B cell (primary cell): ENCODE measurements at regions of chr5 and their contacts with region 1.

Region 1: DNA sequence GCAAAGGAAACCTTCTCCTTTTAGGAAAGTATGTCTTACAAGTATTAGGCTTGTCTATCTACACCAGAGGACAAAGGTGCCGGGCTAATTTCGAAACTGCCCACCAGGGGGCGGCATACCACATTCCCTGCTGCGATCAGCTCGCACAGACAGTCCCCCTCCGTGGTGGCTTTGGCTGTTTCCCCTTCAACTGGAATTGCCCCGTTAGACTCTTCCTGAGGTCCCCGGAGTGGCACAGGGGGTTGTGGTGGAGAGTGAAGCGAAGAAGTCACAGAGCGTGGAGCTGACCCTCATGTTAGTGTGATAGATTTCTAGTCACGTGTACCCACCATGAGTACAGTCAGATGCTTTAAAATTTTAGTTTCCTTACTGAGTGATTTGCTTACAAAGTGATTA is 17.5 kb downstream of the PTTG1 start:
- DNase-seq: peak; percentile 91
- ATAC-seq: peak; percentile 80
- H3K4me3 ChIP-seq: peak overlapping the region; percentile 44 to 83 (median 64)
- H3K4me3 Mint-ChIP-seq: peak overlapping the region; percentile 92
- H3K27ac ChIP-seq: peak overlapping the region; percentile 14 to 54
- H3K27ac Mint-ChIP-seq: peak overlapping the region; percentile 89
- H3K4me1 ChIP-seq: peaks cover 15 to 21% of the 10 kb centered on the region in 2 donors
- H3K4me1 Mint-ChIP-seq: peaks cover 40% of the 10 kb centered on the region
- H3K27me3 ChIP-seq: no peaks in the 10 kb centered on the region
- H3K27me3 Mint-ChIP-seq: no peaks in the 10 kb centered on the region
- CTCF ChIP-seq: peak; percentile 79

Region 2: GRCh38 chr5:160240350-160240749 is 198.9 kb before region 1 on chr5:
- CTCF ChIA-PET with region 1: no interaction called
- POLR2A ChIA-PET with region 1: no interaction called
- intact Hi-C with region 1: no loop called
- DNase-seq: no peak
- ATAC-seq: no peak
- H3K4me3 ChIP-seq: no peak overlapping the region
- H3K4me3 Mint-ChIP-seq: no peak overlapping the region
- H3K27ac ChIP-seq: no peak overlapping the region
- H3K27ac Mint-ChIP-seq: no peak overlapping the region
- H3K4me1 ChIP-seq: no peaks in the 10 kb centered on the region
- H3K4me1 Mint-ChIP-seq: no peaks in the 10 kb centered on the region
- H3K27me3 ChIP-seq: peaks cover 0 to 3% (median 0%) of the 10 kb centered on the region in 4 experiments
- H3K27me3 Mint-ChIP-seq: peaks cover 12% of the 10 kb centered on the region
- CTCF ChIP-seq: no peak

Region 3: DNA sequence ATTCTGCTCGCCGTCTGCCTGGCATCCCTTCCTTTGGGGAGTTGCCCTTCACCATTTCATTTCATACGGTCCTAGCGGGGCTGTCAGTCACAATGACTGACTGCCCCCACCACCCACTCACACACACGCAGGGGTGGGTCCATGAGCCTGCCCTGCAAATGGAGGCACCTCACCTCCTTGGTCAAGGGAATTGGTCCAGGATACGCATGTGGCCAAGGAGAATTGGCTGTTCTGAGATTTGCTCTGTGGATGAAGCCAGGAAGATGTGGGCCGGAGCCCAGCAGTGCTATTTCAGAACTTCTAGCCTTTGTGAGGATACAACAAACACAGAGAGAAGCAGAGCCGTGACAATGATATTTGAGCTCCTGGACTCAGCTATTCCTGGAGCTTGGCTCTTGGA is 85.8 kb before region 1 on chr5:
- CTCF ChIA-PET with region 1: no interaction called
- POLR2A ChIA-PET with region 1: no interaction called
- intact Hi-C with region 1: no loop called
- DNase-seq: no peak
- ATAC-seq: no peak
- H3K4me3 ChIP-seq: no peak overlapping the region
- H3K4me3 Mint-ChIP-seq: no peak overlapping the region
- H3K27ac ChIP-seq: no peak overlapping the region
- H3K27ac Mint-ChIP-seq: no peak overlapping the region
- H3K4me1 ChIP-seq: no peaks in the 10 kb centered on the region
- H3K4me1 Mint-ChIP-seq: no peaks in the 10 kb centered on the region
- H3K27me3 ChIP-seq: no peaks in the 10 kb centered on the region
- H3K27me3 Mint-ChIP-seq: peaks cover 9% of the 10 kb centered on the region
- CTCF ChIP-seq: no peak

Region 4: DNA sequence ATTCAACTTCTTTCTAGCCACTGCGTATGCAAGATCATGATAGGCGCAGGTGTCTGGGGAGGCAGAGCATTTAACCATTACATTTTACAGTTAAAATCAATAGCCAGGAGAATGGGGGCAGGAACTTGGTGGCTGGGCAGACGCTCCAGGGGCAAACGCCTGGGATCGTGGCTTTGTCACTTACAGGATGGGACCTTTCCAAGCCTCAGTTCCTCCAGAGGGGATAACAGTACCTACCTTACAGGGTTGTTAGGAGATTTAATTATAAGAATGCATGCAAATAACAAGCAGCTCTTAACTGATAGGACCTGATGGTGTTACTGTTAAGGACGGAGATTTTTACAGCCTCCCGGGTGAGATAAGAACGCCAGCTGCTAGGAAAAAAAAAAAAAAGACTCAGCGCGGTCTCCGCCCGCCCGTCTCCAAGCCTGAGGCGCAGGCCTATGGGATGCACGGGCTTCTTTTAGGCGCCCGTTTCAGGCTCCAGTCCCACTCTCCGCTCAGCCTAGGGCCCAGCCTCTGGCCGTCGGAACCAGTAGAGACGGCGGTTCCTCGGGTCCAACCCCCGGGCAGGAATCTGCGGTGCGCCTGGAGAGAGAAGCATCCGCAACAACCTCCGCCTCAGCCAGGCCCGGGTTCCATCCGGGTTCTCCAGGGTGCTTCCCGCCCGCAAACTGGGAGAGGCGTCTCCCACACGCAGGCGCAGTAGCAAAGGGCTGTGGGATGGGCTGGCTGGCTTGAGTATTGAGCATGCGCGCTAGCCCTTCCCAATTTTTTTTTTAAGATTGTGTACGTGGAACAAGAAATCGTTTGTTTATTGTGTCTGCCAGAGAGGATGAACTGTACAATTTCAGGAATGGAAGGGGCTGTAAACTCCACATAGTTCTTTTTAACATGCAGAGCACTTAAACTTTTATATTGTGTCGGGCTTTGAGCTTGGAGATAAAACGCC is 39.5 kb before region 1 on chr5 and contains the start of gene FAM200C:
- CTCF ChIA-PET with region 1: interaction called, 10 read pairs
- POLR2A ChIA-PET with region 1: no interaction called
- intact Hi-C with region 1: no loop called
- DNase-seq: peak; percentile 73
- ATAC-seq: peak; percentile 76
- H3K4me3 ChIP-seq: peak within 1 kb of the TSS; percentile 59 to 92 (median 78)
- H3K4me3 Mint-ChIP-seq: peak within 1 kb of the TSS; percentile 83
- H3K27ac ChIP-seq: peak within 1 kb of the TSS in 1 of 2 donors; percentile 74
- H3K27ac Mint-ChIP-seq: peak within 1 kb of the TSS; percentile 54
- H3K4me1 ChIP-seq: peaks cover 4 to 11% of the 10 kb centered on the region in 2 donors
- H3K4me1 Mint-ChIP-seq: peaks cover 14% of the 10 kb centered on the region
- H3K27me3 ChIP-seq: no peaks in the 10 kb centered on the region
- H3K27me3 Mint-ChIP-seq: no peaks in the 10 kb centered on the region
- CTCF ChIP-seq: no peak
- total RNA-seq, gene FAM200C: 1.3 TPM in 2 replicates

Region 5: GRCh38 chr5:160427607-160428006 is 11.6 kb before region 1 on chr5:
- CTCF ChIA-PET with region 1: interaction called, 79 read pairs
- POLR2A ChIA-PET with region 1: interaction called, 7 read pairs
- intact Hi-C with region 1: loop called (anchors 1 kb)
- DNase-seq: no peak
- ATAC-seq: no peak
- H3K4me3 ChIP-seq: no peak overlapping the region
- H3K4me3 Mint-ChIP-seq: no peak overlapping the region
- H3K27ac ChIP-seq: no peak overlapping the region
- H3K27ac Mint-ChIP-seq: no peak overlapping the region
- H3K4me1 ChIP-seq: peaks cover 17 to 23% of the 10 kb centered on the region in 2 donors
- H3K4me1 Mint-ChIP-seq: peaks cover 36% of the 10 kb centered on the region
- H3K27me3 ChIP-seq: no peaks in the 10 kb centered on the region
- H3K27me3 Mint-ChIP-seq: no peaks in the 10 kb centered on the region
- CTCF ChIP-seq: no peak

Region 6: DNA sequence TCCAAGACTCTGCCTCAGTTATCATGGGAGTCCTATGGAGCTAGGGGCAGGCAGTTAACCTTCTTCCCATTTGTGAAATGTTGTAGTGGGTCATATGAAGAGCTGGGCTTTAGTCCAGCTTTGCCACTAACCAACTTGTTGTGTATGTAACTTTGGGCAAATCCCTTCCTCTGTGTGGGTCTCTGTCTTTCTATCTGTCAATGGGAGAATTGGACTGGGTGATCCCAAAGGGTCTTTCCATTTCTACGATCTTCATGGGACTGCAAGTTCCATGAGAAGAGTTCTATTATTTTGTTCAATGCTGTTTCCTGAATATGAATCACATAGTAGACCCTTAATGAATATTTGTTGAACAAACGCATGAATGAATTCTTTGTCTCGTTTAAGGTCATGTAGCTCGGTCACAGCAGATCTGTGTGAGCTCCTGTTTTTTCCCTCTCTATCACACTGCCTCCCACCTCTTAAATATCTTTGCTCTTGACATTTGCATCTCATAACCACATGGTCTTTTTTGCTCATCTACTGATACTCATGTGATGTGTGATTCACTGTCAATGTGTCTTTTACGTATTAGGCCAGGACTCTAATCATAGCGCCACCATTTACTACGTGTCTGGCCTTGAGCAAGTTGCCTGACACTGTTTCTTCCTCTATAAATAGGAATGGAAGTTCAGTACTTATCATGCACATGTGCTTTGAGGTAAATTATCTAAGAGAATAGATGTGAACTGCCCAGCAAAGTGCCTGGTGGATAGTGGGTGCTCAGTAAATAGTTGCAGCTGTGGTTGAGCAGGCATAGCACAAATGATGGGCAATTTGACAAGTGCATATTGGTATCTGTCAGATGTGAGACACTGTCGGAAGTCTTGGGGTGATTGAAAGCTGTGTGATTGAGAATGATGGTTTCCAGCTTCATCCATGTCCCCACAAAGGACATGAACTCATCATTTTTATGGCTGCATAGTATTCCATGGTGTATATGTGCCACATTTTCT is 19.9 kb after region 1 on chr5:
- CTCF ChIA-PET with region 1: interaction called, 89 read pairs
- POLR2A ChIA-PET with region 1: no interaction called
- intact Hi-C with region 1: no loop called
- DNase-seq: no peak
- ATAC-seq: peak; percentile 66
- H3K4me3 ChIP-seq: no peak overlapping the region
- H3K4me3 Mint-ChIP-seq: no peak overlapping the region
- H3K27ac ChIP-seq: no peak overlapping the region
- H3K27ac Mint-ChIP-seq: no peak overlapping the region
- H3K4me1 ChIP-seq: peaks cover 0 to 3% of the 10 kb centered on the region in 2 donors
- H3K4me1 Mint-ChIP-seq: peaks cover 15% of the 10 kb centered on the region
- H3K27me3 ChIP-seq: peaks cover 0 to 12% (median 0%) of the 10 kb centered on the region in 4 experiments
- H3K27me3 Mint-ChIP-seq: peaks cover 5% of the 10 kb centered on the region
- CTCF ChIP-seq: no peak

Region 7: GRCh38 chr5:160479926-160480325 is 40.7 kb after region 1 on chr5:
- CTCF ChIA-PET with region 1: interaction called, 12 read pairs
- POLR2A ChIA-PET with region 1: no interaction called
- intact Hi-C with region 1: no loop called
- DNase-seq: no peak
- ATAC-seq: no peak
- H3K4me3 ChIP-seq: no peak overlapping the region
- H3K4me3 Mint-ChIP-seq: no peak overlapping the region
- H3K27ac ChIP-seq: no peak overlapping the region
- H3K27ac Mint-ChIP-seq: peak overlapping the region; percentile 50
- H3K4me1 ChIP-seq: peaks cover 0 to 5% of the 10 kb centered on the region in 2 donors
- H3K4me1 Mint-ChIP-seq: peaks cover 25% of the 10 kb centered on the region
- H3K27me3 ChIP-seq: no peaks in the 10 kb centered on the region
- H3K27me3 Mint-ChIP-seq: no peaks in the 10 kb centered on the region
- CTCF ChIP-seq: no peak

Region 8: GRCh38 chr5:160500786-160501779 is 61.9 kb after region 1 on chr5:
- CTCF ChIA-PET with region 1: interaction called, 65 read pairs
- POLR2A ChIA-PET with region 1: no interaction called
- intact Hi-C with region 1: no loop called
- DNase-seq: no peak
- ATAC-seq: no peak
- H3K4me3 ChIP-seq: no peak overlapping the region
- H3K4me3 Mint-ChIP-seq: no peak overlapping the region
- H3K27ac ChIP-seq: no peak overlapping the region
- H3K27ac Mint-ChIP-seq: no peak overlapping the region
- H3K4me1 ChIP-seq: peaks cover 2 to 11% of the 10 kb centered on the region in 2 donors
- H3K4me1 Mint-ChIP-seq: peaks cover 11% of the 10 kb centered on the region
- H3K27me3 ChIP-seq: peaks cover 0 to 10% (median 0%) of the 10 kb centered on the region in 4 experiments
- H3K27me3 Mint-ChIP-seq: no peaks in the 10 kb centered on the region
- CTCF ChIP-seq: no peak

Region 9: DNA sequence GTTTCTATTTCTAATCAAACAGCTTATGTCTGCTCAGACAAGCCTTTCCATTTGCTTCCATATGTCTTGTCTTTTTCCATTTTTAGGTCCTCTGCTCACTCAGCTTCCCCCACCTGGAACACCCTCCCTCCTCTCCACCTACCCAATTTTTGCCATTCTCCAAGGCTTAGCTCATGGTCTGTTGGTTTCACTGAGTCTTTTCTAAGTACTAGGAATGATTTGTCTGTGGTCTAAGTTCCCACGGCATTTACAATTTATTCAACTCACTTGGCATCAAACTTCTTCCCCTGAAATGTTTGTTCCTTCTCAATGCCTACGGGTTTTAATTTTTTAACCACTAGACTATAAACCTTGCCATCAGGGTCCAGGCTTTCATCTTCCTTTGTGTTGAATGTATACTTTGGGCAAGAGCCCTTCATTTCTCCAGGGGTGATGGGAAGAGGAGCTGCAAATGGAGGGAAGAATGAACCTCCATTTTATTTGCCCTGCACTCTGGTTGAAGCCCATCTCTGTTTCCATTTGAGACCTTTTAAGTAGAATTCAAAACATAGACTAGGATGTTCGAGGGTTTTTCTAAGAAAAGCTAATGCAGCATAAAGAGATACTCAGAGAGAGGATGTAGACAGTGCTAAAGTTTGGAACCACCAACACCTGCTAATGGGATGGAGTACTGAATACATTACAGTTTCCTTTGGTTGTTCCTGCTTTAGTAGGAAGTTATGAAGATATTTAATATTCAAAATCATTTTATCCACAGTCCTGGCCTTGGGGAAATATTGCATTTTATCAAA is 86.5 kb after region 1 on chr5:
- CTCF ChIA-PET with region 1: no interaction called
- POLR2A ChIA-PET with region 1: no interaction called
- intact Hi-C with region 1: no loop called
- DNase-seq: no peak
- ATAC-seq: no peak
- H3K4me3 ChIP-seq: no peak overlapping the region
- H3K4me3 Mint-ChIP-seq: no peak overlapping the region
- H3K27ac ChIP-seq: no peak overlapping the region
- H3K27ac Mint-ChIP-seq: no peak overlapping the region
- H3K4me1 ChIP-seq: no peaks in the 10 kb centered on the region
- H3K4me1 Mint-ChIP-seq: no peaks in the 10 kb centered on the region
- H3K27me3 ChIP-seq: no peaks in the 10 kb centered on the region
- H3K27me3 Mint-ChIP-seq: peaks cover 6% of the 10 kb centered on the region
- CTCF ChIP-seq: no peak

Region 10: DNA sequence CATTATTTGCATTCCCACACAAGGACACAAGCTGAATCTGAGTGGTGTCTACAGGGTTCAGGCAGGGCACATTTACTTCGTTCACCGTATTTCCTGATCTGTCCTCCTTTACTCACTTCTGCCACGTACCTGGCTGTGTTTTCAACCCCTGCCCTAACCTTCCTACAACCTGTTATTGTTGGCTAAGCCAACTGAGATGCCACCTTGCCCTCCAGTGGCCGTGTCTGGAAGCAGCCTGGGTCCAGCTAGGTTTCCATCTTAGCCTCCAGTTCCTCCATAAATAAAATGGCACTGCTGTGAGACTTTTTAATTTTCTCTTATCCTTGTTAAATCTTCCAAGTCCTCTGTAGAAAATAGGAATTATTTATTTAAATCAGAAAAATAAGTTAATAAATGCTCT is 348.0 kb after region 1 on chr5:
- CTCF ChIA-PET with region 1: interaction called, 13 read pairs
- POLR2A ChIA-PET with region 1: no interaction called
- intact Hi-C with region 1: loop called (anchors 5 kb)
- DNase-seq: no peak
- ATAC-seq: no peak
- H3K4me3 ChIP-seq: no peak overlapping the region
- H3K4me3 Mint-ChIP-seq: no peak overlapping the region
- H3K27ac ChIP-seq: no peak overlapping the region
- H3K27ac Mint-ChIP-seq: no peak overlapping the region
- H3K4me1 ChIP-seq: no peaks in the 10 kb centered on the region
- H3K4me1 Mint-ChIP-seq: no peaks in the 10 kb centered on the region
- H3K27me3 ChIP-seq: no peaks in the 10 kb centered on the region
- H3K27me3 Mint-ChIP-seq: peaks cover 6% of the 10 kb centered on the region
- CTCF ChIP-seq: no peak